ENCODE measurements at regions of chr3 and their contacts with region 1.

Region 1: GRCh38 chr3:49802719-49803464 is at the start of gene INKA1:
- DNase-seq: peak; percentile 89
- ATAC-seq: peak; percentile 80
- H3K4me3 Mint-ChIP-seq: peak within 1 kb of the TSS; percentile 88
- H3K27ac Mint-ChIP-seq: peak within 1 kb of the TSS; percentile 74
- H3K4me1 Mint-ChIP-seq: peaks cover 42% of the 10 kb centered on the region
- H3K27me3 Mint-ChIP-seq: peaks cover 24% of the 10 kb centered on the region
- total RNA-seq, gene INKA1: 1.3 to 2.3 TPM

Region 2: GRCh38 chr3:49775538-49775937 is 27.4 kb before region 1 on chr3:
- POLR2A ChIA-PET with region 1: no interaction called
- DNase-seq: no peak
- ATAC-seq: no peak
- H3K4me3 Mint-ChIP-seq: no peak overlapping the region
- H3K27ac Mint-ChIP-seq: no peak overlapping the region
- H3K4me1 Mint-ChIP-seq: peaks cover 7% of the 10 kb centered on the region
- H3K27me3 Mint-ChIP-seq: no peaks in the 10 kb centered on the region

Region 3: DNA sequence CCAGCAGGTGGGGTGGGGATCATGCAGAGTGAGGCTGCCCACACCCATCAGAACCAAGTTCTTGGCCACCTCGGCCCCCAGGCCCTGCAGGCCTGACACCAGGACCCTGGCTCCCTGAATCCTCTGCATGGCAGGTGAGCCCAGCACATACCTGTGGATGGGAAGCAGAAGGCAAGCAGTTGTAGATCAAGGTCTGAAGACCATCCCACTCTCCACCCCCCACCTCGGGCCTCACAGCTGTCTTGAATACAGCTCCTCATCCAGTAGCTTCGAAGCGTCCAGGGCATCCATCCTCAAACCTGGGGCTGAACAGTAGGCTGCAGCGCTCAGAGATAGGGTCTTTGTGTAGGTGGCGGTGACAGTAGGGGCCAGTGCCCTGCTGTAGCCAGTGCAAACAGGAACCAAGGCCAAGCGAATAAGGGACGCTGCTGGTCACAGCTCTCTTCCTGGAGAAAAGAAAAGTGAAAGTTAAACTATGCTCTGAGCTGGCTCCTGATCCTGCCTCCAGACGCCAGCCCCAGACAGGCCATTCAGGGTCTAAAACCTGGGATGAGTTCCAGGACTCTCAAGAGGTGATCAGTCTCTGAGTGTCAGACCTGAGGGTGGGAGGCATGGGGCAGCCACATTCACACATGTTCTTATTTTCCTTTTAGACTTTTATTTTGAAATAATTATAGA is 10.7 kb after region 1 on chr3 and contains the start of gene UBA7:
- POLR2A ChIA-PET with region 1: interaction called, 65 read pairs
- DNase-seq: peak; percentile 61
- ATAC-seq: peak; percentile 94
- H3K4me3 Mint-ChIP-seq: peak within 1 kb of the TSS; percentile 99
- H3K27ac Mint-ChIP-seq: peak within 1 kb of the TSS; percentile 97
- H3K4me1 Mint-ChIP-seq: peaks cover 24% of the 10 kb centered on the region
- H3K27me3 Mint-ChIP-seq: no peaks in the 10 kb centered on the region
- total RNA-seq, gene UBA7: 299 to 310 TPM

Region 4: GRCh38 chr3:49839193-49839809 is 36.4 kb after region 1 on chr3:
- POLR2A ChIA-PET with region 1: interaction called, 72 read pairs
- DNase-seq: peak; percentile 77
- ATAC-seq: peak; percentile 79
- H3K4me3 Mint-ChIP-seq: no peak overlapping the region
- H3K27ac Mint-ChIP-seq: no peak overlapping the region
- H3K4me1 Mint-ChIP-seq: peaks cover 1% of the 10 kb centered on the region
- H3K27me3 Mint-ChIP-seq: no peaks in the 10 kb centered on the region